PC-9 (cell line): ENCODE measurements at regions of chr14 and their contacts with region 1.

Region 1: DNA sequence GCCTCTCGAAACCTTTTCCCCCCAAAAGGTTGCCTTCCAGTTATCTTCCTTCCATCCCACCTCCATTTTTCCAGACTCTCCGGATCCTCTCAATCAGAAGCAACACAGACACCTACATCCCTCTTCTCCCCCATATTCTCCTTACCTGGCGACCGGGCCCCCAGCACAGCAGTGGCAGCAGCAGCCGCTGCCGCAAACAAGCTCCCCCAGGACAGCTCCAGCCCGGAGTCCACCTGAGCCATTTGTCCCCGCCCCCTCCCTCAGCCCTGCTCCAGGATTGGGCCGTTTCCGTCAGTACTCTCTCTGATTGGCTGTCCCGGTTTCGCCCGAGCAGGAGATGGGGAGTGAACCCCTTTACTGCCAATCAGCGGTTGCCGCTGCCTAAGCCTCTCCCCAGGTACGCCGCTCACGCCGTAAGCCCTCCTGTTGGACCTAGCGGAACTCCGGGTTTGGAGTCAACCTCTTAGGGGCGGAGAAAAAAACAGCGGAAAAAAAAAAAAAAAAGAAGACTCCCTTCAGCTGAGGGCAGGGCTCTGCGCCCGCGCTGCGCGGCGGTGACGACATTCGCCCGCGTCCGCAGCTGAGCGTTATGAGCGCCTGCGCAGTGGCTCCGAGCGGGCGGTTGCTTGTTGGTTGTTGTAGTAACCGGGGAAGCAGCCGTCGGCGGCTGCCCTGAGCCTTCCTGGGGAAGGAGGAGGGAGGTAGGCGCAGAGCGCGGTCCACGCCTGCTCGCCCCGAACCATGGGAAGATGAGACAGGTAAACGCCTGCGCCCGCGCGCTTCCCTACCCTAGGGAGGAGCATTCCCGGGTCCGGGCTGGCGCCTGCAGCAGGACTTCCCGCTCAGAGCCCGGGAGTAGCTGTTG is at the starts of genes ERG28 and TTLL5:
- DNase-seq: peak; percentile 97 to 99
- H3K4me3 ChIP-seq: peak within 1 kb of the TSS; percentile 99
- H3K27ac ChIP-seq: peak within 1 kb of the TSS; percentile 64
- H3K4me1 ChIP-seq: peaks cover 9% of the 10 kb centered on the region; the same call in 1 of the 2 replicates
- H3K27me3 ChIP-seq: no peaks in the 10 kb centered on the region
- CTCF ChIP-seq: no peak
- total RNA-seq, gene ERG28: 25.2 and 32.5 TPM in 2 replicates
- total RNA-seq, gene TTLL5: 60.3 and 75.3 TPM in 2 replicates

Region 2: GRCh38 chr14:75636100-75636692 is 24.7 kb before region 1 on chr14:
- CTCF ChIA-PET with region 1: interaction called, 10 read pairs
- POLR2A ChIA-PET with region 1: no interaction called
- intact Hi-C with region 1: no loop called
- DNase-seq: peak in 1 of 2 experiments; percentile 45
- H3K4me3 ChIP-seq: no peak overlapping the region
- H3K27ac ChIP-seq: peak overlapping the region; percentile 71
- H3K4me1 ChIP-seq: peaks cover 42% of the 10 kb centered on the region
- H3K27me3 ChIP-seq: no peaks in the 10 kb centered on the region
- CTCF ChIP-seq: no peak

Region 3: GRCh38 chr14:75689012-75689411 is 28.1 kb after region 1 on chr14:
- CTCF ChIA-PET with region 1: no interaction called
- POLR2A ChIA-PET with region 1: no interaction called
- intact Hi-C with region 1: no loop called
- DNase-seq: no peak
- H3K4me3 ChIP-seq: no peak overlapping the region
- H3K27ac ChIP-seq: no peak overlapping the region
- H3K4me1 ChIP-seq: no peaks in the 10 kb centered on the region
- H3K27me3 ChIP-seq: no peaks in the 10 kb centered on the region
- CTCF ChIP-seq: no peak